A673 (cell line): ENCODE measurements at regions of chr3 and their contacts with region 1.

Region 1: GRCh38 chr3:52962160-52962559 is 64.8 kb upstream of the STIMATE start:
- DNase-seq: no peak
- H3K4me3 ChIP-seq: no peak overlapping the region
- H3K27ac ChIP-seq: no peak overlapping the region
- H3K4me1 ChIP-seq: no peaks in the 10 kb centered on the region
- H3K27me3 ChIP-seq: no peaks in the 10 kb centered on the region
- CTCF ChIP-seq: no peak

Region 2: DNA sequence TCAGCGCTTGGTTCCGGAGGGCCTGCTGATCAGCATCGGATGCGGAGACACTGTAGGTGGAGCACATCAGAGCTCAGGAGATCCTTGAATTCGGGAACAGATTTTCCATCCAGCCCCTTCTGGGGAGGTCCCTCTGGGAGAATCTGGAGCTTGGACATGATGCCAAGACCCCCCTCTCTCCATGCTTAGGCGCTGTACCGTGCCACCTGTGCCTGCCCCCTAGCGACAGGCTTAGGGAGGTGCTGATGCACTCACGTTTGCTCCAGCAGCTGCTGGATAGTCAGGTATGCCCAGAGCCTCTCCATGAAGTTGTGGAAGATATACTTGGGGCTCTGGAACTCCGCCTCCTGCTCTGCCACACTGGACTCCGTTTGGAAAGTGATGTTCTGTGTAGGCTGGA is 141.4 kb before region 1 on chr3:
- CTCF ChIA-PET with region 1: interaction called, 11 read pairs
- POLR2A ChIA-PET with region 1: no interaction called
- intact Hi-C with region 1: no loop called
- DNase-seq: peak; percentile 18
- H3K4me3 ChIP-seq: no peak overlapping the region
- H3K27ac ChIP-seq: no peak overlapping the region
- H3K4me1 ChIP-seq: no peaks in the 10 kb centered on the region
- H3K27me3 ChIP-seq: no peaks in the 10 kb centered on the region
- CTCF ChIP-seq: peak; percentile 66

Region 3: GRCh38 chr3:52831500-52832301 is 130.5 kb before region 1 on chr3:
- CTCF ChIA-PET with region 1: no interaction called
- POLR2A ChIA-PET with region 1: no interaction called
- intact Hi-C with region 1: no loop called
- DNase-seq: peak; percentile 44
- H3K4me3 ChIP-seq: no peak overlapping the region
- H3K27ac ChIP-seq: no peak overlapping the region
- H3K4me1 ChIP-seq: no peaks in the 10 kb centered on the region
- H3K27me3 ChIP-seq: no peaks in the 10 kb centered on the region
- CTCF ChIP-seq: no peak

Region 4: DNA sequence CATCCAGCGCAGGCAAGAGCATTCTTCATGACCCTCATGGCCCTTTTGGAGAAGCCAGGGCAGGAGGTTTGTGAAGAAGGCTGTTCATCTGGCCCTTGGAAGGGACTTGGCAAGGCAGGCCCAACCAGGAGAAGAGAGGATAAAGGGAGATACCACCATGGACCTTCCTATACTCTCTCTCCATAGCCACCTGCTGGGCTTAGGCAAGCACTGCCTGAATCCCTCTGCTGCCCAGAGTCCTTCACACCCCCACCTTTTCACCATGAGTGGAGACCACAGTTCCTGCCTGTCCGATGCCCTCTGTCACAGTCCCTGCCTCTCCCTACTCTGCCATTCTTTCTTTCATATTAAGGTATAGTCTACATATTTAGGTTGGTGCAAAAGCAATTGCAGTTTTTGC is 94.3 kb after region 1 on chr3:
- CTCF ChIA-PET with region 1: no interaction called
- POLR2A ChIA-PET with region 1: no interaction called
- intact Hi-C with region 1: no loop called
- DNase-seq: no peak
- H3K4me3 ChIP-seq: no peak overlapping the region
- H3K27ac ChIP-seq: no peak overlapping the region
- H3K4me1 ChIP-seq: no peaks in the 10 kb centered on the region
- H3K27me3 ChIP-seq: no peaks in the 10 kb centered on the region
- CTCF ChIP-seq: no peak